ENCODE measurements at regions of chr5 and their contacts with region 1.

Region 1: GRCh38 chr5:140293091-140293848 is 9.6 kb downstream of the PFDN1 start:
- DNase-seq: no peak

Region 2: DNA sequence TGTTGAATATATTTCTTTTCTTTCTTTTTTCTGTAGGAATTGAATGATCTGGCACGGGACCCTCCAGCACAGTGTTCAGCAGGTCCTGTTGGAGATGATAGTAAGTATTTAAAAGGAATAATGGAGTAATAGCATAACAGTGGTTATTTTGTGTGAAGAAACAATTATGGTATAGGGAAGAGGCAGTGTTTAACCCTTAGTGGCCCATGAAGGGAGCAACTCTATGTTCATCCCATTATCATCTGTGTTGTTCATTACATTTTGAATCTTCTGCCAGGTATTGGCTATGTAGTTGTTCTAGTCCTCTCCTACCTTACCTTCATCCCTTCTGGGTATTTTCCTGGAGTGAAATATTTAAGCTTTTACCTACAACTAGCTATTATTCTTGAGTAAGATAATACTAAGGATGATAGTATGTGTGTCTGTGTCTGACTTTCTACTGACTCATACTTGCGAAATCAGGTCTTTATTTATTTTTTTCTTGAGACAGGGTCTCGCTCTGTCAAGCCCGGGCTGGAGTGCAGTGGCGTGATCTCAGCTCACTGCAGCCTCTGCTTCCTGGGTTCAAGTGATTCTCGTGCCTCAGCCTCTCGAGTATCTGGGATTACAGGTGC is 692.8 kb before region 1 on chr5:
- intact Hi-C with region 1: no loop called
- DNase-seq: no peak

Region 3: DNA sequence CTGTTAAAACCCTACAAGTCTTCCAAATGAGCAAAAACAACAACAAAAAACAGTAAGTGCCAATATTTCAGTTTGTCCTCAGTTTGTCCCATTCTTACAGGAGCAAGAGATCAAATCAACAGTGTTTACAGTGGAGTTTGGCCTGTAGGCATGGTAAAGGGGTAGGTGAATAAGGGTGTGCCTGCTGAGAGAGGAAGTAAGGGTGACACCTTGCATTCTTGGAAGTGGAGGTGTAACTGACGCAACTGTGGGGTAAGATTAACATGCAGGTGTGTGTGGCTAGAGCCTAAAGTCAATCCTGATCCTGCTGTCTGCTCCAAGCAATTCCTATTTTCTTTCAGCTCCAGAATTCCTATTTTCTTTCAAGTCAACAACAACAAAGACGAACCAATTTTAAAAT is 33.8 kb before region 1 on chr5:
- intact Hi-C with region 1: loop called (anchors 5 kb)
- DNase-seq: no peak

Measured in posterior cingulate gyrus (tissue), 11 donors.